Cardiac septum (tissue), 1 donor: ENCODE measurements at regions of chr5 and their contacts with region 1.

Region 1: GRCh38 chr5:147963948-147964693 is 57.8 kb upstream of the C5orf46 start:
- DNase-seq: no peak

Region 2: DNA sequence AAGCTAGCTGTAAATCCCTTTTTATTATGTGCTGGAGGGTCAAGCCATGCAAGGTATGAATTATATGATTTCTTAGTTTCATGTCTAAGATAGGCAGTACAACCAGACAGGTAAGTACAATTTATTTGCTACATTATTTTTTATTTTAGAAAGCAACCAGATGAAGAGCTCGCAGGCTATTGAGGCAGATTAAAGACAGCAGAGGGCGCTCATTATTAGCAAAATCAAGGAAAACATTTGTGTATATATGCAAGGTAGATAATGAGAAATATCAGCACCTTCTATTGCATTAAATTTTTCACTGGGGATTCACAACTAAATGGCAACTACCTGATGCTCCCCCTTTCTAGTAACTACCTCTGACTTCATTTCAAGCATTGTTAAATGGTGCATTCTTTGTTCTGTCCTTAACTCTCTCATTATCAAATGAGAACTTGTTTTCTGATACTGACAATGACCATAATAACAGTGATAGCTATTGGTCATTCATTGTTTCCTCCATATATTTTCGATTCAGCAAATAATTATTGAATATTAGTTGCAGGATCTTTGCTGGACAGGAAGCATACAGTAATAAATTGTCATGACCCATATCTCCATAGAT is 77.0 kb before region 1 on chr5:
- intact Hi-C with region 1: no loop called
- DNase-seq: no peak

Region 3: DNA sequence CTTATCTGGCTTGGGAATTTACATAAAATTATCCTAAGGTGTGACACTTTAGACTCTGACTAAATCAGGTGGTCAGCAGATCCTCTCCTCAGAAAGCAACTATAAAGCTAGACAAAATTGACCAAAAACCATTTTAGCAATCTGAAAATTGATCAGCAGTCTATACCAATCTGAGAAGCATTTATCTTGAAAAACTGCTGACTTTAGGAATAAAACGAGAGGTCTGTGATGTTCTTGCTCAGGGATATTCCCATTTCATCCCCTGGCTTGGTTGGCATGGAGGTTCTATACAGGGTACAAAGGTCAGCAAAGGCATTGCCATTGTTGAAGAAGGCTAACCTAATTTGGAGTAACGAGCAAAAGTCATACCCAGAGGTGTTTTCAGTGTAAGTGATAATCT is 111.4 kb after region 1 on chr5:
- intact Hi-C with region 1: no loop called
- DNase-seq: no peak

Region 4: GRCh38 chr5:148107608-148108007 is 143.5 kb after region 1 on chr5:
- intact Hi-C with region 1: loop called (anchors 10 kb)
- DNase-seq: no peak